GM18951 (cell line): ENCODE measurements at regions of chr6 and their contacts with region 1.

Region 1: DNA sequence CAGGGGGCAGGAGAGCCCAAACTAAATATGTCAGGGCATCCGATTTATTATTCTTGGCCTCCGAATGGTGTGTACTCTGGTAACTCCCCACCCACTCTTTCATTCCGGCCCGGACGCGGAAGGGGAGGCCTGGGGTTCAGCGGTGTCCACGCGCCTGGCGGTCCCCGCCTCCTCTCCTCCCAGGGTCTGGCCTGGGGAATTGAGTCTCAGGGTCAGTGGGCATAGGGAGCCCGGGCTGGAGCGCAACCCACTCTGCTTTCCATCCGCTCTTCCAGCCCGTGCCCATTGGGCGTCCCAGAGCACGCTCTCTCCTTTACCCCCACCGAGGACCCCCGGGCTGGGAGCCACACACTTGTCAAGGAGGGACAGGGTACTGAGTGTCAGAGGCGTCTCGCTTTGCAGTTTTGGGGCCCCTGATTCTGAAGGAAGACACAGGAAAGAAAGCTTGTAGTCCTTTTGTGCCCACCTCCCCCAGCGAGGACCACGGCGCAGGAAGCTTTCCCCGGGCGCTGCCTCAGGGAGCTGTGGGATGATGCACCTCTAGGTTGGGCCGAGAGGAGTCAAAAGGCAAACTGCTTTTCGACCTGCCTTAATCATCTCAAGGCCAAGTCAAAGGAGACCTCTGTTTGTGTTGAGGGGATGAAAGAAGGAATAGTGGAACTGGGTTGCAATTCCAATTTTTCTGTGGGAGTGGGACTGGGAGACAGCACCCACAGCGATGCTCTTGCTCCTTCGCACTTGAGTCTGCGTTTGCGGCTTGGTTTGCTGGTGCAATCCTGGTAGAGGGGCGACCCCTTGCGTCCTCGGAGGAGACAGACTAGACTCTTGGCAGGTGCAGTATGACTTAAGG is 2.5 kb downstream of the RSPO3 start:
- POLR2A ChIP-seq: no peak

Region 2: DNA sequence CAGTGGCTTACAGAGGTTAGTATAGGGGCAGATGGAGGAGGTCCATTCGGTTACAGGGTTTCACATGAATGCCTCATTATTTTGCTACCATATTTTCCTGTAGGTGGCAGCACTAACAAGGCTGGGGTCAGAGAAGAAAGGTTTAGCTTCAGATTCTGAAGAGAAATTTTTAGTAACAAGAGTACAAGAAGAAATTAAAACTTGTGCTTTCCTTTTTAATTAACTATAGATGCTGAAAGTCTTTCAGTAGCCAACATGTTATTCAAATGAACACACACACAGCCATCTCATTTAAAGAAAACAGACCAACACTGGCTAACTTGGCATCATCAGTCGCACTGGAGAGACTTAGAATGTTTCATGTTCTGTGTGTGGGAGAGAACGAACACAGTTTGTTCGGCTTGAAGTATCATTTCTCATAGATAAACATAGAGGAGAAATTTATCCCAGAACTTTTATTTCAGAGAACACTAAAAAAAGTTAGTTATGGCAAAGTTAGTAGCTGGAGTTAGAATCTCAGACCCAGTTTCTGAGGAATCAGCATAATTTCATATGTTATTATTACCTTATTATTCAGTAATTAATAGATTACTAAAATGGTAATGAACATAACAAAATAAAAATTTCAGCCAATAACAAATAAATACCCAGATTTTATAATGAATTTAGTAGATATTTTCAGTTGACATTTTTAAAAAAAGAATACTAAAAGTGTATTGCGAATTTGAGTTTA is 316.5 kb before region 1 on chr6:
- in situ Hi-C with region 1: loop called (anchors 25 kb)
- POLR2A ChIP-seq: no peak

Region 3: DNA sequence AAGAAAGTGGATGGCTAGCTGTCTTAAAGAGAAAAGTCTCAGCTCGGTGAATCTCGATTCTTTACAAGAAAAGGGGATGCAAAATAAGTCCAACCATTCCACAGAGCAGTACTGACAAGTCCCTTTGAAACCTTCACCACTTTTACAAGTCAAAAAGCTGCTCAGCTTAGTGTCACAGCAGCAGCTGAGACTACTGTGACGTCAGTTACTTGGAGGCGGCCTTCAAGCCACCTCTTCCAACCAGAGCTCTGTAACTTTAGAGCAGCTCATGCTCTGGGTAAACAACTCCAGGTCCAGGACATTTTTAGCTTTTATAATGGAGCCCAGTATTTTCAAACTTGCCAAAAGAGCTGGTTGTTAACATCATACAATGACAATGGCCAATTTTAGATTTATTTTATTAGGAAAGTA is 338.2 kb after region 1 on chr6 and contains the start of gene KIAA0408:
- in situ Hi-C with region 1: no loop called
- POLR2A ChIP-seq: no peak

Region 4: DNA sequence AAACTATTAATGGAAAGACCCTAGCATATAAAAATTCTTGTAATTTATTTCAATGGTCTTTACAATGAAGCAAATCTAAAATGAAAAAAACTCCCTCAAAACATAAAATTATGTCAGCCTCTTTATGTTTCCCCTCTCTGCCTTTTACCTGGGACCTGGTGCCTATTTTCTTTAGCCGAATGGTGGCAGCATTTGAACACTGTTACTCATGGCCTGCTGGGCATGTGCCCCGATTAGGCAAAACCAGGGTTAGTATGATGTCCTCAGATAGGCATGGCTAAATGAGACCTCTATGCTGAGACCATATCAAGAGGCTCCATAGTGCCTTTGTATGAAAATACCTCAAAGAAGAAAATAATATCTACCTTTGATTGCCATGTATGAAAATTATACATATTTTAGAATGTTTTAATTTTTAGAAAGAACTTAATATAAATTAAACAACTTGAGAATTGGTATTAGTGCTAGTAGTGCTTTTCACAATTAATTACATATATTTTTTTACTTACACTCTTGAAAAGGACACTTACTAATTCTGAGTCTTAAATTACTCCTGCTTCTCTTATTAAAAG is 433.5 kb after region 1 on chr6:
- in situ Hi-C with region 1: no loop called
- POLR2A ChIP-seq: no peak